ENCODE measurements at regions of chr6 and their contacts with region 1.

Region 1: DNA sequence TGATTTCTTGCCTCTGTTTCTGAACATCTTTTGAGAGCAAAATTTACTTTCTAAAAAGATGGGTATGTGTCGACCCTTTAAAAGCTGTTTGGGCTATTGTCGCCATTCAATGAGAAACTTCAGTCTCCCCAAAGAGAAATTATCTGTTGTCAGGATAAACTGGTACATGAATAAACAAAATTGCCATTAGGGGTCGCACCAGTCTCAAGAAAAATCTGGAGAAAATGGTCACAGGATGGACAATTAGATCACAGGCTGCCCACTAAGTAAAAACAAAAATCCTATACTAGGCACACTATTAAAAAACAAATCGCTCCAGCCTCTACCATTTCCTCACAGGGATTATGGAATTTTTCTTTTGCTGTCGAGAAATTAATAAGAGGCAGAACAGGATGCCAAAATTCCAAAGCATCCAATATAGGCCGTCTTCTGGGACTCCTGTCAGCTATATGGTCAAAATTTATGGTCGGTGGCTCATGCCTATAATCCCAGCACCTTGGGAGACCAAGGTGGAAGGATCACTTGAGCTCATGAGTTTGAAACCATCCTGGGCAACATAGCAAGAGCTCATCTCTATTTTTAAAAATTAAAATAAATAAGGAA is 5.5 kb upstream of the HLA-E start:
- DNase-seq: peak in 3 of 5 donors; percentile 35 to 82 (median 75)
- H3K4me3 ChIP-seq: no peak overlapping the region
- H3K27ac ChIP-seq: no peak overlapping the region
- H3K4me1 ChIP-seq: no peaks in the 10 kb centered on the region
- H3K27me3 ChIP-seq: peaks cover 29% of the 10 kb centered on the region
- CTCF ChIP-seq: peak; percentile 49

Region 2: DNA sequence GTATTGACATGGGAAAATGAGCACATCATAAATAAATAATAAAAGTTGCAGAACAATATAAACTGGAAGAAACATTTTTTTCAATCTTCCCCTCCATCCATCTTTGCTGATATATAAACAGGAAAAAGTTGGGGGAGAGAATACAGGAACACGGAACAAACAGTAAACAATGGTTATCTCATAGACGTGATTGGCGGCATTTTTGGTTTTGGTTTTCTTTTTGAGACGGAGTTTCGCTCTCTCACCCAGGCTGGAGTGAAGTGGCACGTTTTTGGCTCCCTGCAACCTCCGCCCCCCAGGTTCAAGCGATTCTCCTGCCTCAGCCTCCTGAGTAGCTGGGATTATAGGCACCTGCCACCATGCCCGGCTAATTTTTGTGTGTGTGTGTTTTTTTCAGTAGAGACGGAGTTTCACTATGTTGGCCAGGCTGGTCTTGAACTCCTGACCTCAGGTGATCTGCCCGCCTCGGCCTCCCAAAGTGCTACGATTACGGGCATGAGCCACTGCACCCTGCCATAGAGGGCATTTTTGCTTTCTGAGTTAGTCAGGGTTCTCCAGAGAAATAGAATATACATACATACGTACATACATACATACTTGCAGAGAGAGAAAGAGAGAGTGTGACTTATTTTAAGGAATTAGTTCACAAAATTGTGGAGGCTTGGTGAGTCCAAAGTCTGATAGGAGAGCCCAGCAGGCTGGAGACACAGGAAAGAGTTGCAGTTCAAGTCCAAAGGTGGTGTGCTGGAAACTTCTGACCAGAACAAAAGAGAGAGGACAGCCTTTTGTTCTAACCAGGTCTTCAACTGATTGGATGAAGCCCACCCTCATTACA is 49.9 kb after region 1 on chr6:
- intact Hi-C with region 1: loop called (anchors 5 kb)
- DNase-seq: no peak
- H3K4me3 ChIP-seq: no peak overlapping the region
- H3K27ac ChIP-seq: peak overlapping the region; percentile 51 to 67
- H3K4me1 ChIP-seq: no peaks in the 10 kb centered on the region
- H3K27me3 ChIP-seq: no peaks in the 10 kb centered on the region
- CTCF ChIP-seq: no peak

Region 3: GRCh38 chr6:30616811-30617564 is 133.2 kb after region 1 on chr6 and contains the start of gene PPP1R10:
- intact Hi-C with region 1: no loop called
- DNase-seq: peak; percentile 100
- H3K4me3 ChIP-seq: peak within 1 kb of the TSS; percentile 91 to 99 (median 95)
- H3K27ac ChIP-seq: peak within 1 kb of the TSS; percentile 98 to 99
- H3K4me1 ChIP-seq: peaks cover 6 to 35% (median 30%) of the 10 kb centered on the region in 3 donors
- H3K27me3 ChIP-seq: no peaks in the 10 kb centered on the region
- CTCF ChIP-seq: no peak
- total RNA-seq, gene PPP1R10: 65.0 TPM

Region 4: DNA sequence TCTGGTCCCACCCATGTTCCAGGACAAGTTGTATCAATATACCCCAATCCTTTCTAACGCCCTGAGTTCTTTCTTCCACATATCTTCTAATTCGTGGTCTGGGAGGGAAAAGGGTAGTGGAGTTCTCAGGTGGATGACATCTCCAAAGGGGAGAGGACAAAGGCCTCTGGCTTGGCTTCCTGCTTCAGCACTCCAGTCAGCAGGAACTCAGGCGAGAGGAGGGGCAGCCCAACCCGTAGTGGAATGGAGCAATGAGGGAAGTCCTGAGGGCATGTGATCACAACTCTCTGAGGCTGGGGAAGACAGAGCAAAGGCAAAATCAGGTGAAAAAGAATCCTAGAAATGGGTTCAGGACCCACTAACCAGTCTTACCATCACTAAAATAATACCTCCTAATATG is 216.6 kb after region 1 on chr6:
- intact Hi-C with region 1: no loop called
- DNase-seq: peak in 2 of 5 donors; percentile 29 to 61
- H3K4me3 ChIP-seq: no peak overlapping the region
- H3K27ac ChIP-seq: peak overlapping the region in 1 of 2 donors; percentile 17
- H3K4me1 ChIP-seq: no peaks in the 10 kb centered on the region
- H3K27me3 ChIP-seq: no peaks in the 10 kb centered on the region
- CTCF ChIP-seq: no peak